PC-9 (cell line): ENCODE measurements at regions of chr3 and their contacts with region 1.

Region 1: GRCh38 chr3:132722164-132723024 is at the start of gene NPHP3:
- DNase-seq: peak; percentile 74 to 93
- H3K4me3 ChIP-seq: peak within 1 kb of the TSS; percentile 91
- H3K27ac ChIP-seq: peak within 1 kb of the TSS; percentile 33
- H3K4me1 ChIP-seq: peaks cover 13% of the 10 kb centered on the region
- H3K27me3 ChIP-seq: no peaks in the 10 kb centered on the region
- CTCF ChIP-seq: no peak
- total RNA-seq, gene NPHP3: 23.4 and 26.5 TPM in 2 replicates

Region 2: DNA sequence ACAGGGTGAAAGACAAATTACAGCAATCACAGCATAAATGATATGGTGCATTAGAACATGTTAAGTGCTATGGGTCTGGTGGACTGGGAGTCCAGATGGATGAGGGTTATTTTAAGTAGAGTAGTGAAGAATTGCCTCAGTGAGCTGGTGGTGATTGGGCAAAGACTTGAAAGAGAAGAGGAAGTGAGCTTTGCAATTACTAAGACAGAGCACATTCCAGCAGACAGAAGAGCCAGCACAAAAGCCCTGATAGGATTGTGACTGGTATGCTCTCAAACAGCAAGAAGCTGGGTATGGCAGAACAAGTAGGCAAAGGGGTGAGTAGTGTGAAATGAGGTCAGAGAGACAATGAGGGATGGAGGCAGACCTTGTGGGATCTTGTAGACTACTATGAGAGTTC is 127.4 kb before region 1 on chr3:
- CTCF ChIA-PET with region 1: no interaction called
- POLR2A ChIA-PET with region 1: no interaction called
- intact Hi-C with region 1: no loop called
- DNase-seq: no peak
- H3K4me3 ChIP-seq: no peak overlapping the region
- H3K27ac ChIP-seq: no peak overlapping the region
- H3K4me1 ChIP-seq: no peaks in the 10 kb centered on the region
- H3K27me3 ChIP-seq: no peaks in the 10 kb centered on the region
- CTCF ChIP-seq: no peak

Region 3: GRCh38 chr3:133384331-133385027 is 662.1 kb after region 1 on chr3:
- CTCF ChIA-PET with region 1: no interaction called
- POLR2A ChIA-PET with region 1: interaction called, 27 read pairs
- intact Hi-C with region 1: no loop called
- DNase-seq: peak in 1 of 2 experiments; percentile 55
- H3K4me3 ChIP-seq: no peak overlapping the region
- H3K27ac ChIP-seq: no peak overlapping the region
- H3K4me1 ChIP-seq: peaks cover 8% of the 10 kb centered on the region
- H3K27me3 ChIP-seq: peaks cover 62% of the 10 kb centered on the region
- CTCF ChIP-seq: peak; percentile 60

Region 4: DNA sequence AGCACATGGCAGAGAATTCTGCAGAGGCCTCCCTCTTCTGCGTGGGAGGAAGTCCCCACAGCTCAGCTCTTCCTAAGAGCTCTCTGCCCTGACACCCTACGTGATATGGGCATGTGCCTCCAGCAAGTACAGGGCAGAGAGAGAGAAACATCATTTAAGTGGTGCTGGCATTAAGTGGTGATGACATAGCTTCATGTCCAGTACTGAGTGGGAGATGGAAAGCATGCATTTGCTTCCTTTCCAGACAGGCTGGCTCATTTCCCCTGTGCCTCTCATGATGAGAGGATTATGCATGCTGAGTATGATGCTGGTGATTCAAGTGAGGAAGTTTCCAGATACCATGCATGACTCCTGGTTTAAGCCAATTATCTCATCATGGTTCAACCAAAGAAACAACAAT is 704.3 kb after region 1 on chr3:
- CTCF ChIA-PET with region 1: no interaction called
- POLR2A ChIA-PET with region 1: interaction called, 8 read pairs
- intact Hi-C with region 1: loop called (anchors 2 kb)
- DNase-seq: no peak
- H3K4me3 ChIP-seq: no peak overlapping the region
- H3K27ac ChIP-seq: no peak overlapping the region
- H3K4me1 ChIP-seq: no peaks in the 10 kb centered on the region
- H3K27me3 ChIP-seq: peaks cover 39% of the 10 kb centered on the region
- CTCF ChIP-seq: no peak

Region 5: DNA sequence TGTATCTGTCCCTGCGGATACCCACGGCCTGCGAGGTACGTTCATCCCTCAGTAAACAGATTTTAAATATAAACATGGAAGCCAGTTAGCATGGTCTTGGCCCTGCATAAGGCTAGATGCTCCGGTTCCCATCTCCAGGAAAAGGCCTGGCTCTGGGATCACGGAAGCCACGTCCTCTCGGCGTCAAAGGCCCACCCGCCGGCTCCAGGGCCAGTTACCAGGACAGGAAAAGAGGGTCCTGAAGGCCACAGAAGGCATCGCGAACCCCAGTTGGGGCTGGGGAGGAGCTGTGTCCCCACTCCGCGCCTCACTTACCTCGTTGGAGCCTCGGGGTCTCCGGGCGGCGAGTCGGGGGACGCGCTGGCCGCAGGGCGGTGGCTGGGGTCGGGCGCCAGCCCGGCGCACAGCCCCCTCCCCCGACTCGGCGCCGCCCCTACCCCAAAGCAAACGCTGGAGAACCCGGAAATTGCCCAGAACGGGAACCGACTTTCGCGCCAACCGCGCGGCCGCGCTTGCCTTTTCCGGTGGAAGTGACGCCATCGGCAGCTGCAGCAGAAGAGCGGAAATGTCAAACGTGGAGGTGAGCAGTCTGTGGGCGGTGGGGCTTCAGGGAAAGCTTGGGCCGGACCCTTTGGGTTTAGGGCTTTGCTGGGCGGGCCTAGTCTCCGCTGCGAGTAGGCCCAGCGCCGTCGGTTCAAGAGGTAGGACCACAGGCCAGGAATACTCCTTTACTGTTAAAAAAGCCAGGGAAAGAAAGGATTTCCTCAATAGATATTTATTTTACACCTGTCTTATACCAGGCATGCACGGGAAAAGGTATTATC is 939.3 kb after region 1 on chr3 and contains the start of gene TOPBP1:
- CTCF ChIA-PET with region 1: no interaction called
- POLR2A ChIA-PET with region 1: no interaction called
- intact Hi-C with region 1: loop called (anchors 10 kb)
- DNase-seq: peak; percentile 52 to 73
- H3K4me3 ChIP-seq: peak within 1 kb of the TSS; percentile 95
- H3K27ac ChIP-seq: peak within 1 kb of the TSS; percentile 36; the same call in 1 of the 2 replicates
- H3K4me1 ChIP-seq: peaks cover 22% of the 10 kb centered on the region; the same call in 1 of the 2 replicates
- H3K27me3 ChIP-seq: no peaks in the 10 kb centered on the region
- CTCF ChIP-seq: no peak
- total RNA-seq, gene TOPBP1: 42.2 and 52.2 TPM in 2 replicates

Region 6: DNA sequence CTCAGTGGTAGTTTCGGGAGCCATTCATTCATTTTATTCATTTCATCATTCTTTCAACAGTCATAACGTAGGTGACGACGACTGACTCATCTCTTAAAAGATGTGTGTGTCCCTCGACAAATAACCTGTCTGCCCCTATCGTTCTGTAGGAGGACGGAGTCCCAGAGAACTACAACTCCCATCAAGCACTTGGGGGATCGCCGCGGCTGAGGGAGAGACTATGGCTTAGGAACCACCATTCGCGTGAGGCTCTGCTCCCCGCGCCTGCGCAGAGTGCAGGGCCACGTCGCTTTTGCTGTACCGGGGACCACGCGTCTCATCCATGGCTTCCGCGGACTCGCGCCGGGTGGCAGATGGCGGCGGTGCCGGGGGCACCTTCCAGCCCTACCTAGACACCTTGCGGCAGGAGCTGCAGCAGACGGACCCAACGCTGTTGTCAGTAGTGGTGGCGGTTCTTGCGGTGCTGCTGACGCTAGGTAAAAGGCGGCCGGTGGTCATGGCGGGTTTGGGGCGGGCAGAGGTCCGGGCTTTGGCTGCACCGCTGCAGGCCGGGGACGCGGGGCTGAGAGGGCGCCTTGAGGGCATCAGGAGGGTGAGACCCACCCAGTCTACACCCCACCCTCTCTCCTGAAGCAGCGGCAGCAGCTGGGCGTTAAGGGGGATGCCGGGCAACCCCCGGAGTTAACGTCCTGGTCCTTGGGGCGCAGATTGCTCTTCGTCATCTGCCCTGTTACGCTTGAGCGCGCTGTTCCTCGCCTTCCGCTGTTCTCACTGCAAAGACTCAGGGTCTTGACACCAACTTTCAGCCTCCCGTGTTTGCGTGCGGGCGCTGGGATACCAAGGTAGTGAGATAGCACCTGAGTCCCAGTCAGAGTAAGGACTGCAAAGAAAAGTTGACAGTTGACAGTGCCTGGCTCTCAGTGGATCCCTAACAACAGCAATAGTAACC is 1083.4 kb after region 1 on chr3 and contains the start of gene SRPRB:
- CTCF ChIA-PET with region 1: no interaction called
- POLR2A ChIA-PET with region 1: no interaction called
- intact Hi-C with region 1: loop called (anchors 10 kb)
- DNase-seq: peak; percentile 89 to 92
- H3K4me3 ChIP-seq: peak within 1 kb of the TSS; percentile 79
- H3K27ac ChIP-seq: peak within 1 kb of the TSS; percentile 43; the same call in 1 of the 2 replicates
- H3K4me1 ChIP-seq: peaks cover 18% of the 10 kb centered on the region
- H3K27me3 ChIP-seq: no peaks in the 10 kb centered on the region
- CTCF ChIP-seq: no peak
- total RNA-seq, gene SRPRB: 25.5 and 29.8 TPM in 2 replicates

Region 7: DNA sequence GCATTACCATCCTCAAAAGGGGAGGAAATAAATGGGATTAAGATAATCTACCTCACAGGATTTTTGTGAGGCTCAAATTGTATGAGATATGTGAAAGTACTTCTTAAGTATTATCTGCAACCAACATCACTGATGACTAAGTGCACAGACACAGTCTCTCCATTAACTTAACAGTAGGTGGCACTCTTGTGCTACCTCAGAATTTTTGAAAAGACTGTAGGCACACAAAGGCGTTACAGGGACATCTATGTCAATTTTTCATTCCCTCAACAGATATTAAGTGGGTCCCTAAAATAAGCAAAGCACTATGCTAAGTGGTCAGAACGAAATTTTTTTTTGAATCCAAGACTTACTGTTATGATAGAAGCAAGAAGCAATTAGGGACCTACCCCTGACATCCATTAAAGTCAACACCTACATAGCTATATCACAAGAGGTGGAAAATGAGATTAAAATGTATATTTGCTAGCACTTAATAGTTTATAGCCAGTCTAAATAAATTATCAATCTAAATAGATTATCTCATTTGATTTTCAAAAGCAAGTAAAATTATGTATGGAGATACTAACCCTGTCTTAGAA is 1475.4 kb after region 1 on chr3:
- CTCF ChIA-PET with region 1: no interaction called
- POLR2A ChIA-PET with region 1: no interaction called
- intact Hi-C with region 1: loop called (anchors 10 kb)
- DNase-seq: peak; percentile 18 to 51
- H3K4me3 ChIP-seq: no peak overlapping the region
- H3K27ac ChIP-seq: no peak overlapping the region
- H3K4me1 ChIP-seq: peaks cover 22% of the 10 kb centered on the region
- H3K27me3 ChIP-seq: no peaks in the 10 kb centered on the region
- CTCF ChIP-seq: peak; percentile 81

Region 8: GRCh38 chr3:134485718-134486576 is 1763.6 kb after region 1 on chr3 and contains the starts of genes ANAPC13 and CEP63:
- CTCF ChIA-PET with region 1: no interaction called
- POLR2A ChIA-PET with region 1: no interaction called
- intact Hi-C with region 1: loop called (anchors 5 kb)
- DNase-seq: peak; percentile 95
- H3K4me3 ChIP-seq: peak within 1 kb of the TSS; percentile 89
- H3K27ac ChIP-seq: peak within 1 kb of the TSS; percentile 73
- H3K4me1 ChIP-seq: peaks cover 27% of the 10 kb centered on the region
- H3K27me3 ChIP-seq: no peaks in the 10 kb centered on the region
- CTCF ChIP-seq: no peak
- total RNA-seq, gene ANAPC13: 52.7 and 61.8 TPM in 2 replicates
- total RNA-seq, gene CEP63: 28.5 and 31.5 TPM in 2 replicates